ENCODE measurements at regions of chr17 and their contacts with region 1.

Region 1: GRCh38 chr17:64115871-64116534 is 13.9 kb downstream of the ERN1 start:
- DNase-seq: peak; percentile 26
- H3K4me3 Mint-ChIP-seq: peak overlapping the region; percentile 50
- H3K27ac Mint-ChIP-seq: peak overlapping the region; percentile 90
- H3K4me1 Mint-ChIP-seq: peaks cover 67% of the 10 kb centered on the region
- H3K27me3 Mint-ChIP-seq: no peaks in the 10 kb centered on the region

Region 2: GRCh38 chr17:64091116-64091515 is 24.9 kb before region 1 on chr17:
- intact Hi-C with region 1: loop called (anchors 1 kb)
- DNase-seq: no peak
- H3K4me3 Mint-ChIP-seq: peak overlapping the region; percentile 70
- H3K27ac Mint-ChIP-seq: peak overlapping the region; percentile 96
- H3K4me1 Mint-ChIP-seq: peaks cover 74% of the 10 kb centered on the region
- H3K27me3 Mint-ChIP-seq: no peaks in the 10 kb centered on the region

Region 3: DNA sequence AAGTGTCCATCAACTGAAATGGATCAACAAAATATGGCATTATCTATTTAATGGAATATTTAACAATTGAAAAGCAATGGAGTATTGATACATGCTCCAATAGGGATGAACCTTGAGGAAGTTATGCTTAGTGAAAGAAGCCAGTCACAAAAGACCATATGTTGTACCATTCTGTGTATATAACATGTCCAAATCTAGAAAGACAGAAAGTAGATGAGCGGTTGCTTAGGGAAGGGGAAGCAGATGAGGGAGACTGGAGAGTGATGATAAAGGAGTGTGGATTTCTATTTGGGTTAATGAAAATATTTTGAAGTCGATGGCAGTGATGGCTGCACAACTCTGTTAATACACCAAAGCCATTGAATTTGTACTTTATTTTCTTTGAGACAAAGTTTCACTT is 22.4 kb after region 1 on chr17:
- intact Hi-C with region 1: no loop called
- DNase-seq: no peak
- H3K4me3 Mint-ChIP-seq: no peak overlapping the region
- H3K27ac Mint-ChIP-seq: no peak overlapping the region
- H3K4me1 Mint-ChIP-seq: peaks cover 3% of the 10 kb centered on the region
- H3K27me3 Mint-ChIP-seq: no peaks in the 10 kb centered on the region

Measured in activated T-helper 2 cell treated with anti-CD3 and anti-CD28 coated beads, Interferon-gamma antibody, Interleukin-2, Interleukin-4, amounts not matched to agents 10 μg/mL and 5 μg/mL and 100 μg/mL, durations not matched to agents 14 hours and 24 hours and 36 hours (primary cell).